Activated CD8-positive, alpha-beta T cell treated with anti-CD3 and anti-CD28 coated beads, Interleukin-2, amount 10 ng/mL, durations not matched to agents 7 days and 5 days (primary cell): ENCODE measurements at regions of chr5 and their contacts with region 1.

Region 1: GRCh38 chr5:156920042-156920860 is 42.8 kb downstream of the TIMD4 start:
- DNase-seq: peak; percentile 58
- ATAC-seq: peak; percentile 76
- H3K4me3 Mint-ChIP-seq: peak overlapping the region; percentile 65
- H3K27ac Mint-ChIP-seq: peak overlapping the region; percentile 79
- H3K4me1 Mint-ChIP-seq: peaks cover 75% of the 10 kb centered on the region
- H3K27me3 Mint-ChIP-seq: no peaks in the 10 kb centered on the region

Region 2: DNA sequence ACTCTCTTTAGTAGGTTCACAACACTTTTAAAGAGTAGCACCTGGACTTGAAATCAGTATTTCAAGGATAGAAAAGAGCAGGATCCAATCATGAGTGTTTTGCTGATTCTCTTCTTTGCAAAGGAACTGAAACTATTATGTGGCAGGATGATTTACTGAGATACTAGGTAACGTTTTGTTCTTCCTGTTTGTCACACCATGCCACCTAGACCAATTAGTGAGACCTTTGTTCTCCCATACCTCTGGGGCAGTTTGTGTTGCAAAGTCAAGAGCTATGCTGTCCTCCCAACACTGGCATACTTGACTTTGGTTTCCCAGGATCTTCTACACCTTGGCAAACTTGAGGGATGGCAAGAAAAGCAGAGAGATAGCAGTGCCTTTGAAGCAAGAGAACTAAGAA is 26.7 kb before region 1 on chr5:
- CTCF ChIA-PET with region 1: interaction called, 14 read pairs
- POLR2A ChIA-PET with region 1: interaction called, 3 read pairs
- DNase-seq: no peak
- ATAC-seq: peak; percentile 52
- H3K4me3 Mint-ChIP-seq: peak overlapping the region; percentile 7
- H3K27ac Mint-ChIP-seq: peak overlapping the region; percentile 90
- H3K4me1 Mint-ChIP-seq: peaks cover 35% of the 10 kb centered on the region
- H3K27me3 Mint-ChIP-seq: no peaks in the 10 kb centered on the region

Region 3: DNA sequence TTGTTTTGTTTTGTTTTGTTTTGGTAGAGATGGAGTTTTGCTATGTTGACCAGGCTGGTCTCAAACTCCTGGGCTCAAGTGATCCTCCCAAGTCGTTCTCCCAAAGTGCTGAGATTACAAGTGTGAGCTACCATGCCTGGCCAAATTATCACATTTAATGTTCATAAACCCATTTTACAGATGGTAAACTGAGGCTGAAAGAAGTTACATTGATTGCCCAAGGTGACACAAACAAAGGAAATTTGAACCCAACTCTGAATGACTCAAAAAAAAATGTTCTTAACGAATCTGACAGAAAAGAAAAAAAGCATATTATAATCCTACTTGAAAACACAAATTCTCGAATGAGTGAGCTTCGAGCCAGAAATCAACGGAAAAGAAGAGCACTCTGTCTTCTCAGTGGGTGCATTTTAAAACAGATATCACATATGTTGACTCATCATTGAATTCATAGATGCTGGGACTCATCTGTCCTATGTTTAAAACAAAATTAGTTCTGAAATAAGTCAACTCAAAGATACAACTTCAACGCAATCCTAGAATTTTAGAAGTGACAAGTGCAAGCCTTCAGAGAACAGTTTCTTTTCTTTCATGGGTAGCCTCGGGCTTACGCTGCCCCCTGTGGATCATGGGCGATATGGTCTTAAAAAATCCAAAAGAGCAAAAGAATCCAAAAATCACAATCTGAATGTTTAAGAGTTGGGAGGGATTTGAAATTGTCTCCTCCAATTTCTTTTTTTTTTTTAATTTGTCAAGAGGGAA is 14.4 kb after region 1 on chr5:
- CTCF ChIA-PET with region 1: interaction called, 44 read pairs
- POLR2A ChIA-PET with region 1: interaction called, 11 read pairs
- DNase-seq: peak; percentile 82
- ATAC-seq: peak; percentile 57
- H3K4me3 Mint-ChIP-seq: peak overlapping the region; percentile 18
- H3K27ac Mint-ChIP-seq: peak overlapping the region; percentile 41
- H3K4me1 Mint-ChIP-seq: peaks cover 82% of the 10 kb centered on the region
- H3K27me3 Mint-ChIP-seq: no peaks in the 10 kb centered on the region